Activated CD4-positive, alpha-beta T cell treated with anti-CD3 and anti-CD28 coated beads, Interleukin-2, amount 10 ng/mL, durations not matched to agents 24 days and 14 days (primary cell): ENCODE measurements at regions of chr3 and their contacts with region 1.

Region 1: GRCh38 chr3:194682694-194683310 is 2.9 kb upstream of the FAM43A start:
- DNase-seq: peak; percentile 91
- H3K4me3 Mint-ChIP-seq: no peak overlapping the region
- H3K27ac Mint-ChIP-seq: no peak overlapping the region
- H3K4me1 Mint-ChIP-seq: peaks cover 37% of the 10 kb centered on the region
- H3K27me3 Mint-ChIP-seq: peaks cover 34% of the 10 kb centered on the region

Region 2: GRCh38 chr3:194671900-194672808 is 10.6 kb before region 1 on chr3 and contains the start of gene LSG1:
- intact Hi-C with region 1: loop called (anchors 1 kb)
- DNase-seq: peak; percentile 97
- H3K4me3 Mint-ChIP-seq: peak within 1 kb of the TSS; percentile 99
- H3K27ac Mint-ChIP-seq: peak within 1 kb of the TSS; percentile 97
- H3K4me1 Mint-ChIP-seq: peaks cover 48% of the 10 kb centered on the region
- H3K27me3 Mint-ChIP-seq: no peaks in the 10 kb centered on the region
- total RNA-seq, gene LSG1: 59.0 and 60.2 TPM in 2 replicates

Region 3: GRCh38 chr3:194749631-194750490 is 67.1 kb after region 1 on chr3:
- intact Hi-C with region 1: no loop called
- DNase-seq: no peak
- H3K4me3 Mint-ChIP-seq: no peak overlapping the region
- H3K27ac Mint-ChIP-seq: no peak overlapping the region
- H3K4me1 Mint-ChIP-seq: no peaks in the 10 kb centered on the region
- H3K27me3 Mint-ChIP-seq: peaks cover 5% of the 10 kb centered on the region

Region 4: GRCh38 chr3:194769020-194769643 is 86.3 kb after region 1 on chr3:
- intact Hi-C with region 1: loop called (anchors 1 kb)
- DNase-seq: peak; percentile 96
- H3K4me3 Mint-ChIP-seq: peak overlapping the region; percentile 80
- H3K27ac Mint-ChIP-seq: peak overlapping the region; percentile 83
- H3K4me1 Mint-ChIP-seq: peaks cover 10% of the 10 kb centered on the region
- H3K27me3 Mint-ChIP-seq: peaks cover 31% of the 10 kb centered on the region

Region 5: GRCh38 chr3:194906229-194906629 is 223.4 kb after region 1 on chr3:
- intact Hi-C with region 1: loop called (anchors 10 kb)
- DNase-seq: peak; percentile 43
- H3K4me3 Mint-ChIP-seq: no peak overlapping the region
- H3K27ac Mint-ChIP-seq: no peak overlapping the region
- H3K4me1 Mint-ChIP-seq: peaks cover 7% of the 10 kb centered on the region
- H3K27me3 Mint-ChIP-seq: peaks cover 17% of the 10 kb centered on the region

Region 6: GRCh38 chr3:195106418-195106906 is 423.7 kb after region 1 on chr3:
- intact Hi-C with region 1: loop called (anchors 1 kb)
- DNase-seq: peak; percentile 91
- H3K4me3 Mint-ChIP-seq: peak overlapping the region; percentile 51
- H3K27ac Mint-ChIP-seq: no peak overlapping the region
- H3K4me1 Mint-ChIP-seq: peaks cover 6% of the 10 kb centered on the region
- H3K27me3 Mint-ChIP-seq: no peaks in the 10 kb centered on the region

Region 7: DNA sequence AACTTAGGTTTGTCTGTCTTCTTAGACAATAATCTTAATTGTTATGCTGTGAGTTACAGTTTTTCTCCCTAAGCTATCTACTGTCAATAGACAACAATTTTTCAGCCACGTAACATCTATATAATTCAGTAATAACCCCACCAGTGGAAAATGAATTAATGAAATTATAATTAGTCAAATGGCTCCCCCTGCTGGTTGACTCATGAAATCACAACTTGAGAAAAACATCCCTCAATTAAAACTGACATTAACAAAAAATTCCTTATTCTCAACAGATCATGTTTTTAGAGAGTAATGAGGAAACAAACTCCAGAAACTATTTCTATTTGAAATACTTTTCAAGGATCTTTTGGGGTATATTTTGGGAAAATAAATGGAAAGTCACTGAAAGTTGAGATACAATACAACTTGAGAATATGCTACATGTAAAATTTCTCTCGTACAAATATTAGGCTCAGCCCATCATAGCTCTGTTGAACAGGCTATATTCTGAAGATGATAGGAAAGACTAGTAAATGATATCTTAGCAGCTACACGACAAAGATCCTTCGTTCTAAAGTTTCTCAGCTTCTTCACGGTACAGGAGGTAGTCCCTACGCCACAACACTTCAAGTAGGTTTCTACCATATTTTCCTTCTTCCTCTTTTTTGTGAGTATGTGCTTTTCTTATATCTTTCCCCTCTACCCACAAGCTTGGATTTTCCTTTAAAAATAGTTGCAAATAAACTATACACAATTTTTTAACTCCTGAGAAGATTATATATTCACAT is 839.6 kb after region 1 on chr3:
- intact Hi-C with region 1: loop called (anchors 5 kb)
- DNase-seq: peak; percentile 73
- H3K4me3 Mint-ChIP-seq: no peak overlapping the region
- H3K27ac Mint-ChIP-seq: peak overlapping the region; percentile 18
- H3K4me1 Mint-ChIP-seq: peaks cover 25% of the 10 kb centered on the region
- H3K27me3 Mint-ChIP-seq: no peaks in the 10 kb centered on the region